ENCODE measurements at regions of chr7 and their contacts with region 1.

Region 1: DNA sequence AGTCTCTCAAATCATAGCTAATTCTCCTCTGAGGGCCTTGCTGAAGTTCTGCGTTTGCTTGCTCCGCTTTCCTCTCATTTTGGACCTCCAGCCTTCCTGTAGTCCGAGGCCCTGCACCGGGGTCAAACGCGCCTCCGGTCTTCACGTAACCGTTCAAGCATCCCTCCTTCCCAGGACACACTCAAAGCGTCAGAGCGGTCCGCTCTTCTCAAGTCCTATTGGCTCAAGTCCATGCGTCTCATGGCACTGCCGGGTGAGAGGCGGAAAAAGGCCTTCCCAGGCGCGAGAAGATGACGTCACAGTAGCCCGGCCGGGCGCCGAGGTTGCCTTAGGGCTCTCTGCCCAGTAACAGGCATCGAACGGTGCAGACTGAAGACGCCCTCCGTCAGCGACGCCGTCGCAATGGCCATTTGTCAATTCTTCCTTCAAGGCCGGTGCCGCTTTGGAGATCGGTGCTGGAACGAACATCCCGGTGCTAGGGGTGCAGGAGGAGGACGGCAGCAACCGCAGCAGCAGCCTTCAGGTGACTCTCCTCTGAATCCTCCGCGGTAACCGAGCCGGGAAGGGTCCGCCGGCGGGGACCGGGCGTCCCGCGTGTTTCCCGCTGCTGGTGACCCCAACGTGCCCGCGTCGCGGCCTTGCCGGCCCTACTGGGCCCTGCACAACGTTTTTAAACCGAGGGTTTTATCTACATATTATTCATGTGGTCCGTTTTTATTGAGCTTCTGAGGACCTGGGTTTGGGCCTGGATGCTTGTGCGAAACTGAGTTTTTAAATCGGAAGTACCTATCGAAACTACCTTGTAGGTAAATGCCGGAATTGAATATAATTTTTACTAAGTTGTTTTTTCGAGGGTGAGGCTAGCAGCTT is at the start of gene NUP42:
- DNase-seq: peak; percentile 92 to 99 (median 94)
- ATAC-seq: peak; percentile 93
- H3K4me3 ChIP-seq: peak within 1 kb of the TSS; percentile 82
- H3K27ac ChIP-seq: peak within 1 kb of the TSS; percentile 83
- H3K4me1 ChIP-seq: peaks cover 8 to 9% of the 10 kb centered on the region in 2 experiments
- H3K27me3 ChIP-seq: no peaks in the 10 kb centered on the region
- CTCF ChIP-seq: no peak
- EP300 ChIP-seq: peak; percentile 20; the same call in 1 of the 2 replicates
- POLR2A ChIP-seq: peak; percentile 96
- RAD21 ChIP-seq: no peak
- polyA plus RNA-seq, gene NUP42: 86.0 to 86.4 TPM

Region 2: DNA sequence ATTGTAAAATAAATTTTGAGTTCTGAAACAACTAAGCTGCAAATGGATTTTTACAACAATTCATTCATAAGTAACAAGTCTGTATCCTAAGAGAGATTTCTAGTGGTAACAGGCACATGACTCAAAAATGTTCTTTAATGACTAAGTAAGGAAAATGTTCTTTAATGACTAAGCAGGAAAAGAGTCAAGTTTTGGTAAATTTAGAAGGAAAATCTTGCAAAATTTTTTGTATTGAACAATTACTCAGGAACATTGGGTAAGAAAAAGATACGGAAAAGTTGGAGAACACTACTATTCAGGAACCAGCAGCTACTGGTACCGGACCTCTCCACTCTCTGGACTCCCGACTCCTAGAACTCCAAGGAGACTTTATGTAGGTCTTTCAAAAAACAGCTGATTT is 201.5 kb before region 1 on chr7:
- CTCF ChIA-PET with region 1: no interaction called
- POLR2A ChIA-PET with region 1: no interaction called
- in situ Hi-C with region 1: no loop called
- intact Hi-C with region 1: no loop called
- DNase-seq: no peak
- ATAC-seq: no peak
- H3K4me3 ChIP-seq: no peak overlapping the region
- H3K27ac ChIP-seq: no peak overlapping the region
- H3K4me1 ChIP-seq: peaks cover 0 to 2% of the 10 kb centered on the region in 2 experiments; a peak in 1 of 5 replicates
- H3K27me3 ChIP-seq: no peaks in the 10 kb centered on the region
- CTCF ChIP-seq: no peak
- EP300 ChIP-seq: no peak
- POLR2A ChIP-seq: no peak
- RAD21 ChIP-seq: no peak

Region 3: DNA sequence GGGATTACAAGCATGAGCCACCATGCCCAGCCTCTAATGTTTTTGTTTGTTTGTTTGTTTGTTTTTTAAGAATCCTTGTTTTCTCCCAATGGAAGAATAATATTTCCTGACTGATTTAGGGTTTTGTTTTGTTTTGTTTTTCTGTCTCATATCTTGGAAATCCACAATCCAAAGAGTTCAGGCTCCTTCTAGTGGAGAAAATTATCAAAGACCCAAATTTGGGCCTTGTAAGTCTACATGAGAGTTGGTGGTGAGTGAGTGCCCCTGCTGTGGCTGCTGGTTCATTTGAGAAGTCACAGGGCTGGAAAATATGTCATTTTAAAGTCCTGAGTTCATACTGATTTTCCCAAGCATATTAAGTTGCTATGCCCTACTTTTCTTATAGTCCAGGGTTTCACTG is 109.9 kb before region 1 on chr7:
- CTCF ChIA-PET with region 1: no interaction called
- POLR2A ChIA-PET with region 1: no interaction called
- in situ Hi-C with region 1: no loop called
- intact Hi-C with region 1: no loop called
- DNase-seq: peak in 1 of 4 experiments; percentile 40
- ATAC-seq: peak; percentile 80
- H3K4me3 ChIP-seq: no peak overlapping the region
- H3K27ac ChIP-seq: no peak overlapping the region
- H3K4me1 ChIP-seq: peaks cover 0 to 20% of the 10 kb centered on the region in 2 experiments; a peak in 3 of 5 replicates
- H3K27me3 ChIP-seq: no peaks in the 10 kb centered on the region
- CTCF ChIP-seq: peak; percentile 34 to 66 (median 53); a peak in 4 of 6 replicates
- EP300 ChIP-seq: no peak
- POLR2A ChIP-seq: no peak
- RAD21 ChIP-seq: peak; percentile 58 to 79

Region 4: DNA sequence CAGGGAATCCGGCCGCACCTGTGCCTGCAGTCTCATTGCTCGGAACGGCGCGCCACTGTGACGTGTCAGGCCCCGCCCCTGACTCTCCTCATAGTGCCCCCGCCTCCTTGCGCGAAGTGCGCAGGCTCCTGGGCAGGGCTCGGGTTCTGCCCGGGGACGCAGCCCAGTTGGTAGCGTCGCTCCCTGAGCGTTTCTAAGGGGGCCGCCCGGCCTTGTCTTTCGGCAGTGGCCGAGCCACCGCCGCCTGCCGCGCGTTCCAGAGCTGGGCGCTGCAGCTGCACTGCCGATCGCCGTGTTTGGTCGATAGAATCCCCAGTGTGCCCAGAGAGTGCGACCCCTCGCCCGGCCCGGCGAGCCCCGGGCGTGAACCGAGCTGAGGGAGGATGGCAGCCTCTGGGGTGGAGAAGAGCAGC is 76.3 kb before region 1 on chr7 and contains the start of gene KLHL7:
- CTCF ChIA-PET with region 1: no interaction called
- POLR2A ChIA-PET with region 1: interaction called, 4 read pairs
- in situ Hi-C with region 1: no loop called
- intact Hi-C with region 1: loop called (anchors 2 kb)
- DNase-seq: peak; percentile 92 to 96 (median 94)
- ATAC-seq: peak; percentile 97
- H3K4me3 ChIP-seq: peak within 1 kb of the TSS; percentile 80
- H3K27ac ChIP-seq: peak within 1 kb of the TSS; percentile 74
- H3K4me1 ChIP-seq: peaks cover 7 to 11% of the 10 kb centered on the region in 2 experiments; a peak in 4 of 5 replicates
- H3K27me3 ChIP-seq: no peaks in the 10 kb centered on the region
- CTCF ChIP-seq: no peak
- EP300 ChIP-seq: no peak
- POLR2A ChIP-seq: peak; percentile 86
- RAD21 ChIP-seq: no peak
- polyA plus RNA-seq, gene KLHL7: 4.2 to 7.8 TPM

Region 5: DNA sequence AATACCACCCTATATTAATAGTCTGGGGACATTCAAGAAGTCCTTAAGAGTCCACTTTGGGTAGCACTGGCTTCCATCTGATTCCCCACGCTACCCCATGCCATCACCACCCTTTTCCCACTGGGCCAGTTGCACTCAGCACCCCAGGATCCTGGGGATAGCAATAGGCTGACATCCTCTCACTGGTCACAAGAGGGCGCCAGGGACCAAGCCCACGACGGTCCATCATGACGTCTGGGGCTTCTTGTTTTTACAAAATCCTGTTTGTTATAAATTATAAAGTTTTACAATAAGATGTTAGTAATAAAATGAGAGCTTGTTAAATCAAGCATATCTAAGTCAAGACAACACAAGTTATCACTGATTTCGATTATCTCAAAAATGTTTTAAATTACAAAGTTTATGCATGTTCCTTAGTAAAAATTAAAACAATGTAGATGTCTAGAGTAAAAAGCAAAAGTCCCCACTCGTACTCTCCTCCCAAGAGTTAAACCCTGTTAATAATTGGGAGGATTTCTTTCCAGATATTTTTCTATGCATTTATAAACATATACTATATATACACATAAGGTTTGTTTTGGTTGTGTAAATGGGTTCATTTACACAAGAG is 80.0 kb after region 1 on chr7:
- CTCF ChIA-PET with region 1: interaction called, 9 read pairs
- POLR2A ChIA-PET with region 1: interaction called, 4 read pairs
- in situ Hi-C with region 1: no loop called
- intact Hi-C with region 1: loop called (anchors 5 kb)
- DNase-seq: peak; percentile 82 to 86 (median 84)
- ATAC-seq: peak; percentile 99
- H3K4me3 ChIP-seq: no peak overlapping the region
- H3K27ac ChIP-seq: no peak overlapping the region
- H3K4me1 ChIP-seq: peaks cover 0 to under 1% of the 10 kb centered on the region in 2 experiments; a peak in 2 of 5 replicates
- H3K27me3 ChIP-seq: no peaks in the 10 kb centered on the region
- CTCF ChIP-seq: peak; percentile 88 to 92 (median 91)
- EP300 ChIP-seq: no peak
- POLR2A ChIP-seq: no peak
- RAD21 ChIP-seq: peak; percentile 74 to 78

Region 6: DNA sequence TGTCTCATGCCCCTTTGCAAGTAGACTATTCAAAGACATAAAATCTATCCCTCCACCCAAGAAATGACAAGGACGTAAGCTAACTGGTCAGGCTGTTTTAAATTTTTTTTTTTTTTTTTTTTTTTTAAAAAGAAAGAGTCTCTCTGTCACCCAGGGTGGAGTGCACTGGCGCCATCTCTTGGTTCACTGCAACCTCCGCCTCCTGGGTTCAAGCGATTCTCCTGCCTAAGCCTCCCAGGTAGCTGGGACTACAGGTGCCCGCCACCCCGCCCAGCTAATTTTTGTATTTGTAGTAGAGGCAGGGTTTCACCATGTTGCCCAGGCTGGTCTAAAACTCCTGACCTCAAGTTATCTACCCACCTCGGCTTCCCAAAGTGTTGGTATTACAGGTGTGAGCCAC is 338.7 kb after region 1 on chr7:
- CTCF ChIA-PET with region 1: no interaction called
- POLR2A ChIA-PET with region 1: no interaction called
- in situ Hi-C with region 1: no loop called
- intact Hi-C with region 1: loop called (anchors 10 kb)
- DNase-seq: peak in 1 of 4 experiments; percentile 27
- ATAC-seq: peak; percentile 42; the same call in 2 of the 3 replicates
- H3K4me3 ChIP-seq: no peak overlapping the region
- H3K27ac ChIP-seq: no peak overlapping the region
- H3K4me1 ChIP-seq: peaks cover 0 to 3% of the 10 kb centered on the region in 2 experiments; a peak in 1 of 5 replicates
- H3K27me3 ChIP-seq: no peaks in the 10 kb centered on the region
- CTCF ChIP-seq: peak; percentile 22 to 24 (median 23); a peak in 2 of 6 replicates
- EP300 ChIP-seq: no peak
- POLR2A ChIP-seq: no peak
- RAD21 ChIP-seq: 0 out of 4 replicates have a peak, but pooled peaks of 1 of the 2 experiments have one; percentile 11